MCF 10A (cell line): ENCODE measurements at regions of chr5 and their contacts with region 1.

Region 1: GRCh38 chr5:151659001-151659754 is 27.5 kb downstream of the SPARC start:
- DNase-seq: peak; percentile 87
- H3K4me3 Mint-ChIP-seq: no peak overlapping the region
- H3K27ac Mint-ChIP-seq: no peak overlapping the region
- H3K4me1 Mint-ChIP-seq: peaks cover 22% of the 10 kb centered on the region
- H3K27me3 Mint-ChIP-seq: no peaks in the 10 kb centered on the region
- CTCF ChIP-seq: peak; percentile 98

Region 2: GRCh38 chr5:151447174-151448037 is 211.8 kb before region 1 on chr5 and contains the start of gene SLC36A1:
- CTCF ChIA-PET with region 1: interaction called, 15 read pairs
- POLR2A ChIA-PET with region 1: interaction called, 3 read pairs
- intact Hi-C with region 1: no loop called
- DNase-seq: peak; percentile 97
- H3K4me3 Mint-ChIP-seq: peak within 1 kb of the TSS; percentile 77
- H3K27ac Mint-ChIP-seq: peak within 1 kb of the TSS; percentile 66
- H3K4me1 Mint-ChIP-seq: peaks cover 19% of the 10 kb centered on the region
- H3K27me3 Mint-ChIP-seq: peaks cover 28% of the 10 kb centered on the region
- CTCF ChIP-seq: peak; percentile 97
- total RNA-seq, gene SLC36A1: 10.4 and 16.2 TPM in 2 replicates

Region 3: DNA sequence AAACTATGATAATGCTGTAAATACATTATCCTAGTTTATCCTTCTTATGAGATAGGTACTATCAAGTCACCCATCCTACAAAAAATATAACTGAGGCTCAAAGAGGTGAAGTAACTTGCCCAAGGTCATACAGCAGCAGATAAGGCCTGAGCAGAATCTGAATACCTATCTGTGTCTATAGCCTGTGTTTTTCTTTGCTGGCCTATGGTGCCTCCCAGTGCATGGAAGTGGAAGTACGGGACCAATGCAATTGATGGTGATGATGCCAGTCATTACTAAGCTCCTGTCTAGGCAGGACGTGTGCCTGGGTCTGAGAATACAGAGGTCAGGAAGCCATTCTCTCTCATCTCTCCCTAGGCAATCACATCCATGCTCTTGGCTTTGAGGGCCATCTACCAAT is 135.8 kb before region 1 on chr5:
- CTCF ChIA-PET with region 1: interaction called, 13 read pairs
- POLR2A ChIA-PET with region 1: no interaction called
- intact Hi-C with region 1: no loop called
- DNase-seq: peak; percentile 71
- H3K4me3 Mint-ChIP-seq: no peak overlapping the region
- H3K27ac Mint-ChIP-seq: no peak overlapping the region
- H3K4me1 Mint-ChIP-seq: peaks cover 2% of the 10 kb centered on the region
- H3K27me3 Mint-ChIP-seq: no peaks in the 10 kb centered on the region
- CTCF ChIP-seq: peak; percentile 84

Region 4: DNA sequence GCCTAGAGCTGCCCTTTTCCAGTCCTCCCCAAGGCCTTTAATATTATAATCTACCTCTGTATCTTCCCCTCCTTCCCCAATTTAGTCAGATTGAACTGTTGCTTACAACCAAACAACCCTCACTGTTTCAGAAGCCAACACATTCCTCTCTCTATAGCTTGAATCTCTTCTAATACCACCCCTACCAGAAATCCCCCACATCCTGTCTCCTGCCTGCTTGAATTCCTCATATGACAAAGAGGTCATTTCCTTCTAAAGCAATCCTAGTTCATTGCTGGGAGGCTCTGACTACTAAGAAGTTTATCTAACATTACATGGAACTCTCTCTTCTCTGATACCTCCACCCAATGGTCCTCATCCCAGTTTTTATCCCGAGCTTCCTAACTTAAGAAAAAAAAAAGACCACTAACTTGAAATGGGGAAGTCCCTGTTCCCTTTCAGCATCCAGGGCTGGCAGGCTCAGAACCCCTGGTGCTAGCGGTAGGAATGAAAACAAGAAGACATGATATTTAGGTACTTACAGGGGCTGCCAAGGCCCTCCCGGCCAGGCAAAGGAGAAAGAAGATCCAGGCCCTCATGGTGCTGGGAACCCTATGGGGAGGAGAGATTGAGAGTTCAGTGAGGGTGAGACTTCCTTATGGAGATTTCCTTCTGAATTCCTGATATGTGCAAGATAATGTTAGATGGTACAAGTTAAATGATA is 16.6 kb after region 1 on chr5:
- CTCF ChIA-PET with region 1: interaction called, 94 read pairs
- POLR2A ChIA-PET with region 1: interaction called, 12 read pairs
- intact Hi-C with region 1: no loop called
- DNase-seq: no peak
- H3K4me3 Mint-ChIP-seq: no peak overlapping the region
- H3K27ac Mint-ChIP-seq: no peak overlapping the region
- H3K4me1 Mint-ChIP-seq: peaks cover 13% of the 10 kb centered on the region
- H3K27me3 Mint-ChIP-seq: no peaks in the 10 kb centered on the region
- CTCF ChIP-seq: no peak

Region 5: DNA sequence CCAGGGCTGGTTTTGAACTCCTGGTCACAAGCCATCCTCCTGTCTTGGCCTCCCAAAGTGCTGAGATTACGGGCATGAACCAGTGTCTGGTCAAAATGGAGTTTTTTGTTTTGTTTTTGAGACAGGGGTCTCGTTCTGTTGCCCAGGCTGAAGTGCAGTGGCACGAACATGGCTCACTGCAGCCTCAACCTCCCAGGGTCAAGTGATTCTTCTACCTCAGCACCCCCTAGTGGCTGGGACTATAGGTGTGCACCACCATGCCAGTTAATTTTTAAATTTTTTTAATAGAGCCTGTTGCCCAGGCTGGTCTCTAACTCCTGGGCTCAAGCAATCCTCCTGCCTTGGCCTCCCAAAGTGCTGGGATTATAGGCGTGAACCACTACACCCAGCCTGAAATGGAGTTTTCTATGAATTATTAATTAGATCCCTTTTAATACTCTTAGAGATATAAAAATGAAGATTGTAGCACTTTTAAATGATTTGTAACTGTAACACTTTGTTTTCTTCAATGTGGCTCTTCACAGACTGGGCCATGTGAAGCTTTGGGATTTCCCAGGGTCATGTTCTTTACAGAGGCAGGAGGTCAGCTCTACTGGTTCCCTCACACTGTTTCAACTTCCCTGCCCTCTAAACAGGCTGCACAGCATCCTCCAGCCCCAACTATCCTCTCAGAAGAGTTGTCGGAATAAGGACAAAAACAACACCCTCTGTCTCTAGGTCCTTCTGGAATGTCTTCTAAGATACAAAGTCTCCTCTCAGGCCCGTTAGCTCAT is 60.2 kb after region 1 on chr5:
- CTCF ChIA-PET with region 1: interaction called, 31 read pairs
- POLR2A ChIA-PET with region 1: interaction called, 3 read pairs
- intact Hi-C with region 1: loop called (anchors 1 kb)
- DNase-seq: peak; percentile 82
- H3K4me3 Mint-ChIP-seq: no peak overlapping the region
- H3K27ac Mint-ChIP-seq: no peak overlapping the region
- H3K4me1 Mint-ChIP-seq: no peaks in the 10 kb centered on the region
- H3K27me3 Mint-ChIP-seq: no peaks in the 10 kb centered on the region
- CTCF ChIP-seq: peak; percentile 72

Region 6: DNA sequence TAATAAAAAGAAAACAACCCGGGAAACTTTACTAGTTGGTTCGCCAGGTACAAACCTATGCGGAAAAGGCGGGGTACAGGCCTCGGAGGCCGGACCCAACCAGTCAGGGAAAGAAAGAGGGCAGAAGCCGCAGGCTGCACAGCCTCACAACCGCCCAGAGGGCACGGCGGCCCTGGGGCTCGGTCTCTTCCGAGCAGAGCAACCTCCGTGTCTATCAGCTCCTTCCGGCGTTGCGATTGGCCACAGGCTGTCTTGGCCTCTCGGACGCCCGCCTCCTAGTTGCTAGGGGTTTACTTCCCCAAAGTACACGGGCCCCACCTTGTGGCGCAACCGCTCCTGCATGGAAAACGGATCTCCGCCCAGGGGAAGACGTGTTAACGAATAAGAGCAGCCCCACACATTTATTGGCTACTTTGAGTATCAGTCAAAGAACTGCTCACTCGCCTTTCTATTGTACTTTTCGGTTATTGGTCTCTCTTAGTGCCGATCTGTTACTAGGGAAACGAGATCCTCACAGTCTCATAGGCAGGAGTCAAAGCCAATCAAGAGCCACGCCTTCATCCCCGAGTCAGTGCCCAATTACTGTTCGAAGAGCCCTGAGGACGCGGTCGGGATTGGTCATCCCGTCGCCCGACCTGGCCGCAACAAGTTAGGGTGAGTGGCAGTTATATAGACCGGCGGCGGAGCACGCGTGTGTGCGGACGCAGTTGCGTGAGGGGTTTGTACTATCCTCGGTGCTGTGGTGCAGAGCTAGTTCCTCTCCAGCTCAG is 112.3 kb after region 1 on chr5 and contains the start of gene G3BP1:
- CTCF ChIA-PET with region 1: interaction called, 24 read pairs
- POLR2A ChIA-PET with region 1: interaction called, 35 read pairs
- intact Hi-C with region 1: loop called (anchors 1 kb)
- DNase-seq: peak; percentile 100
- H3K4me3 Mint-ChIP-seq: no peak within 1 kb of the TSS
- H3K27ac Mint-ChIP-seq: no peak within 1 kb of the TSS
- H3K4me1 Mint-ChIP-seq: peaks cover 13% of the 10 kb centered on the region
- H3K27me3 Mint-ChIP-seq: no peaks in the 10 kb centered on the region
- CTCF ChIP-seq: peak; percentile 67
- total RNA-seq, gene G3BP1: 279 and 282 TPM in 2 replicates

Region 7: GRCh38 chr5:152349683-152350526 is 690.7 kb after region 1 on chr5:
- CTCF ChIA-PET with region 1: interaction called, 26 read pairs
- POLR2A ChIA-PET with region 1: no interaction called
- intact Hi-C with region 1: no loop called
- DNase-seq: peak; percentile 70
- H3K4me3 Mint-ChIP-seq: no peak overlapping the region
- H3K27ac Mint-ChIP-seq: no peak overlapping the region
- H3K4me1 Mint-ChIP-seq: no peaks in the 10 kb centered on the region
- H3K27me3 Mint-ChIP-seq: no peaks in the 10 kb centered on the region
- CTCF ChIP-seq: peak; percentile 97